Activated B cell treated with CpG ODN at 0.5 μM for 24 hours (primary cell): ENCODE measurements at regions of chr1 and their contacts with region 1.

Region 1: DNA sequence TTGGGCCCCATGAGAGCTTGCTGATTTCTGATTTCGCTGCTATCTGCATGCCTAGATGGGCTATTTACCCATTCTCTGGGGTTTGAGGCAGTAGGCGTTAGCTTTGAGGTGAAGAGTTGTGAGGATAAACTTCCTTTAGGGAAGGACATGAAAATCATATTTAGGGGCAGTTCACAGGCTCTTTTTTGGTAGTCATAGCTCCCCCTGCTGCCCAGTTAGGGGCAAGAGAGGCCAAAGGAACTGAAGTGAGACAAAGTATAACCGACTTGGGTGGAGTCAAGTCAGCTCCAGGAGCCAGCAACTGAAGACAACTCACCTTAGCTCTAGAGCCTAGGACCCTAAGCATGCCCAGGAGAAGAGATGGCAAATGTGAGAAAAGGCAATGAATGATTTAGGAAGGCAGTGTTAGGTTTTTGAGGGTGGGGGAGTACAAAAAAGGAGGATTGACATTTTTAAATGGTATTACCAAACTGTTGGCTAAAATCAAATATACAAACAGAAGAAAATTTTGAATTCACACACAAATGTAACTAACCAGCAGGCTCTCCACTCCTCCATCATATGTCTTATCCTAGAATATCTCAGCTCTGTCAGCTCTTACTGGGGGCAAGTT is 625.2 kb downstream of the LMO4 start:
- DNase-seq: peak; percentile 21
- ATAC-seq: peak; percentile 79
- H3K4me3 Mint-ChIP-seq: no peak overlapping the region
- H3K27ac Mint-ChIP-seq: no peak overlapping the region
- H3K4me1 Mint-ChIP-seq: peaks cover 14% of the 10 kb centered on the region
- H3K27me3 Mint-ChIP-seq: no peaks in the 10 kb centered on the region
- CTCF ChIP-seq: no peak

Region 2: GRCh38 chr1:87131809-87132283 is 822.0 kb before region 1 on chr1:
- CTCF ChIA-PET with region 1: interaction called, 3 read pairs
- POLR2A ChIA-PET with region 1: no interaction called
- intact Hi-C with region 1: loop called (anchors 1 kb)
- DNase-seq: peak; percentile 66
- ATAC-seq: peak; percentile 97
- H3K4me3 Mint-ChIP-seq: peak overlapping the region; percentile 85
- H3K27ac Mint-ChIP-seq: no peak overlapping the region
- H3K4me1 Mint-ChIP-seq: peaks cover 10% of the 10 kb centered on the region
- H3K27me3 Mint-ChIP-seq: peaks cover 23% of the 10 kb centered on the region
- CTCF ChIP-seq: peak; percentile 74

Region 3: GRCh38 chr1:87292684-87293493 is 660.9 kb before region 1 on chr1:
- CTCF ChIA-PET with region 1: interaction called, 77 read pairs
- POLR2A ChIA-PET with region 1: no interaction called
- intact Hi-C with region 1: loop called (anchors 1 kb)
- DNase-seq: no peak
- ATAC-seq: peak; percentile 52
- H3K4me3 Mint-ChIP-seq: no peak overlapping the region
- H3K27ac Mint-ChIP-seq: no peak overlapping the region
- H3K4me1 Mint-ChIP-seq: no peaks in the 10 kb centered on the region
- H3K27me3 Mint-ChIP-seq: peaks cover 2% of the 10 kb centered on the region
- CTCF ChIP-seq: peak; percentile 71

Region 4: GRCh38 chr1:87335175-87335884 is 618.5 kb before region 1 on chr1:
- CTCF ChIA-PET with region 1: interaction called, 18 read pairs
- POLR2A ChIA-PET with region 1: interaction called, 3 read pairs
- intact Hi-C with region 1: no loop called
- DNase-seq: peak; percentile 69
- ATAC-seq: peak; percentile 65
- H3K4me3 Mint-ChIP-seq: peak overlapping the region; percentile 89
- H3K27ac Mint-ChIP-seq: peak overlapping the region; percentile 93
- H3K4me1 Mint-ChIP-seq: peaks cover 62% of the 10 kb centered on the region
- H3K27me3 Mint-ChIP-seq: no peaks in the 10 kb centered on the region
- CTCF ChIP-seq: no peak

Region 5: DNA sequence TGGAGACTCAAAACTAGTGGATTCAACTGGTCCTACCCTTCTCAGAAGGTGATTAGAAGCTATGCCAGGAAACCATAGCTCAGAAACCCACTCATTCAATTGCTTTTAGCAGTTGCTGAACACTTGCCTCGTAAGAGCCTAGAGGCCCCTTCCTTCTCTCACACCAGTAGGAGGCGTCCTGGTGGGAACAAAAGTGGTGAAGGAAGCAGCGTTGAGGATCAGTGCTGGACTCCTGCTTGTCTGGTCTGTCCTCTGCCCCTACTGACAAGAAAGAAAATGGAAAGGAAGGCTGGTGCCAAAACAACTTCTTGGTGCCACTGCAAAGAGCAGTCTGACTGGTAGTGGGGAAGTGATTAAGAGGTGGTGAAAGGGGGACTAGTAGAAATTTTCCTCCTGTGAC is 355.4 kb before region 1 on chr1:
- CTCF ChIA-PET with region 1: no interaction called
- POLR2A ChIA-PET with region 1: no interaction called
- intact Hi-C with region 1: loop called (anchors 5 kb)
- DNase-seq: no peak
- ATAC-seq: no peak
- H3K4me3 Mint-ChIP-seq: no peak overlapping the region
- H3K27ac Mint-ChIP-seq: no peak overlapping the region
- H3K4me1 Mint-ChIP-seq: peaks cover 10% of the 10 kb centered on the region
- H3K27me3 Mint-ChIP-seq: no peaks in the 10 kb centered on the region
- CTCF ChIP-seq: no peak

Region 6: DNA sequence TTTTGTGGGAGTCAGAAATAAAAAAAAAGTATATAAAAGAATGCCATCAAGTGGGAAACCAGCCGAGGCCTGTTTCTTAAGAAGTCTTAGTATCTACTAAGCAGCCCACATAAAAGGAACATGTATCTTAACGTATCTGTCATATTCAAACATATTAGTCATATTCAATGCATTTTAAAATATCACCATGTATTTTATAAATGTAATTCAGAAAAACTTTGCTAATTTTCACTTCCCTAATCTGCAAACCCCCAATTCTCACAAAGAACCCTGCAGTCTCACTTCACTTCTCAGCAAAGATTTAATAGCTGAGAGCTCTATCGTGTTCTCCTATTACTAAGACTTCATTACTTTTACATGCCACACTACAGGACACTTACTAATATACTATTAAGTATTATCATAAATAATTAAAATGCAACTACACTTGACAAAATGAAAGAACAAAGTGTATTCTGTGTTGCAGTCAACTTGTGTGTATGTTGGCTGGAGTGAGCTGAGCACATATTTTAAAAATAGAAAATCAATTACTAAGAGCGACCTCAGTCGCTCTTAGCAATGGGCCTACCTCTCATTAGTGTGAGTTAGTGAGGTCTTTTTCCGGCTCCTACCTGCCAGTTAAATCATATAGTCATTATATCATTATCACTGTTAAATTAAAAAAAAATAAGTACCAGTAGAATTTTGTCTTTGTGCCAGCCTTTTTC is 140.8 kb before region 1 on chr1:
- CTCF ChIA-PET with region 1: no interaction called
- POLR2A ChIA-PET with region 1: no interaction called
- intact Hi-C with region 1: loop called (anchors 5 kb)
- DNase-seq: no peak
- ATAC-seq: peak; percentile 88
- H3K4me3 Mint-ChIP-seq: no peak overlapping the region
- H3K27ac Mint-ChIP-seq: peak overlapping the region; percentile 64
- H3K4me1 Mint-ChIP-seq: peaks cover 23% of the 10 kb centered on the region
- H3K27me3 Mint-ChIP-seq: no peaks in the 10 kb centered on the region
- CTCF ChIP-seq: no peak

Region 7: DNA sequence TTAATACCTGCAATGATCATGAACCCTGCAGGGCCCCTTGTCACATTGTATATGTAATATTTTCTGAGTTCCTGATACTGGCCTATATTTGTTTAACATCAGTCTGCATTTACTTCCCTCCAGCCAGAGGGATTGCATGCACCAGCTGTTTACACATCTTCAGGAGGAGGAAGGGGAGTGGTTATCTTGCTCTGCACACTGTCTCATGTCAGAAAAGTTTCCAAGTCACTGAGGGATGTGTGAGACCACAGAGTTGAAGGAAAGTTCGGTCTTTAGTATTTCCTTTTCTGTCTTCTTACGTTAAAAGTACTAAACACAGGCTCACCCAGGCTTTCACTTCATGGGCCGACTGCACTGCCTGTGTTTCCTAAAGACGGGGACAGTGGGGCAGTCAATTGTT is 51.0 kb before region 1 on chr1:
- CTCF ChIA-PET with region 1: no interaction called
- POLR2A ChIA-PET with region 1: no interaction called
- intact Hi-C with region 1: no loop called
- DNase-seq: no peak
- ATAC-seq: peak; percentile 14
- H3K4me3 Mint-ChIP-seq: peak overlapping the region; percentile 28
- H3K27ac Mint-ChIP-seq: peak overlapping the region; percentile 47
- H3K4me1 Mint-ChIP-seq: peaks cover 19% of the 10 kb centered on the region
- H3K27me3 Mint-ChIP-seq: no peaks in the 10 kb centered on the region
- CTCF ChIP-seq: no peak